ENCODE measurements at regions of chr15 and their contacts with region 1.

Region 1: DNA sequence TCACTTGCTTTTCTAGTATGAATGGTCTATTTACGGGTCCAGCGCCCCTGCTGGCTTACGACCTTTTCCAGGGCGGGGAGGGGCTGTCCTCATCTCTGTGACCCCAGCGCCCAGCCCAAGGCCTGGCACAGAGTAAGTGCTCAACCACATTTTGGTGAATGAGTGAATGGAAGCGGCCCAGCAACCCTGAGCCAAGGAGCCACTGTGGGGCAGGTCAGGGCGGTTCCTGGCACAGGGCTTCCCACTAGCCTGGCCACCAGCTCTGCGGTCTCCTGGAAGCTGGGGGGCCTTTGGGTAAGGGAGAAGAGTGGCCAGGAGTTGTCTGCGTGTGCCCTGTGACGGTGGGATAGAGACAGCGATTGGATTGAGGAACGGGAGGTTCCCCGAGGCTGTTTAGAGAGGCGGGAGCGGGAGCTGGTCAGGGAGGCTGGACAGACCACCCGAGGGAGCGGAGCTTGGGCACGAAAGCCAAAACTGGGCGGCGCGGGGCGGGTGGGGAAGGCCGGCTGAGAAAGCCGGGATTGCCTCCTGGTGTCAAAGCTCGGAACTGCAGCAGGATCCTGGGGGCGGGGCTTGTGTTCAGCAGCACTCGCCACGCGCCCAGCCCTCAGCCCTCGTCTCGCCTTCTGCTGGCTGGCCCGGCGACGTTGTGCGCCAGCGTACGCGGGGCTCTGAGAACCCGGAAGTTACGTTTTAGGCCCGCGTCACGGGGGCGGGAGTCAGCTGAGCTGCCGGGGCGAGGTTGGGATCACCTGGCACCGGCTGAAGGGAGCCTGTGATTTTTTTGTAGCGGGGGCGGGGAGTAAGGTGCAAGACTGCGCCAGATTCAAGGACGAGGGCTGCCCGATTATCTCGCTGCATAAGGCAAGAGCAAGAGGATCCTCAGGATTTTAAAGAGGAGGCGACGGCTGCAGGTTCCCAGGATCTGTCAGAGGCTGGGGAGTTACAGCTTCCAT is at the start of gene VPS18:
- DNase-seq: peak; percentile 96 to 99 (median 98)
- ATAC-seq: peak; percentile 99
- H3K4me3 ChIP-seq: peak within 1 kb of the TSS; percentile 94
- H3K4me3 Mint-ChIP-seq: peak within 1 kb of the TSS; percentile 96 to 99 (median 98)
- H3K27ac ChIP-seq: peak within 1 kb of the TSS; percentile 83
- H3K27ac Mint-ChIP-seq: peak within 1 kb of the TSS; percentile 87 to 98 (median 96)
- H3K4me1 ChIP-seq: peaks cover 17 to 18% of the 10 kb centered on the region in 2 donors
- H3K4me1 Mint-ChIP-seq: peaks cover 30 to 47% (median 37%) of the 10 kb centered on the region in 7 donors
- H3K27me3 ChIP-seq: no peaks in the 10 kb centered on the region
- H3K27me3 Mint-ChIP-seq: peaks cover 0 to 7% (median 0%) of the 10 kb centered on the region in 5 donors
- total RNA-seq, gene VPS18: 19.9 to 22.3 (median 20.5) TPM

Region 2: GRCh38 chr15:40513609-40514008 is 380.4 kb before region 1 on chr15:
- CTCF ChIA-PET with region 1: no interaction called
- POLR2A ChIA-PET with region 1: no interaction called
- intact Hi-C with region 1: loop called in 1 of 2 experiments (anchors 2 kb)
- DNase-seq: no peak
- ATAC-seq: no peak
- H3K4me3 ChIP-seq: no peak overlapping the region
- H3K4me3 Mint-ChIP-seq: no peak overlapping the region
- H3K27ac ChIP-seq: no peak overlapping the region
- H3K27ac Mint-ChIP-seq: no peak overlapping the region
- H3K4me1 ChIP-seq: peaks cover 0 to 6% of the 10 kb centered on the region in 2 donors
- H3K4me1 Mint-ChIP-seq: peaks cover 11 to 23% (median 19%) of the 10 kb centered on the region in 7 donors
- H3K27me3 ChIP-seq: peaks cover 9 to 15% of the 10 kb centered on the region in 2 donors
- H3K27me3 Mint-ChIP-seq: peaks cover 40 to 63% (median 46%) of the 10 kb centered on the region in 5 donors

Region 3: GRCh38 chr15:40593588-40594428 is 300.2 kb before region 1 on chr15 and contains the start of gene KNL1:
- CTCF ChIA-PET with region 1: no interaction called
- POLR2A ChIA-PET with region 1: interaction called, 3 read pairs
- intact Hi-C with region 1: loop called (anchors 1 to 10 kb)
- DNase-seq: peak; percentile 83 to 94 (median 91)
- ATAC-seq: peak; percentile 85
- H3K4me3 ChIP-seq: peak within 1 kb of the TSS; percentile 98
- H3K4me3 Mint-ChIP-seq: peak within 1 kb of the TSS; percentile 91 to 99 (median 96)
- H3K27ac ChIP-seq: peak within 1 kb of the TSS; percentile 83
- H3K27ac Mint-ChIP-seq: peak within 1 kb of the TSS; percentile 91 to 100 (median 98)
- H3K4me1 ChIP-seq: peaks cover 11 to 12% of the 10 kb centered on the region in 2 donors
- H3K4me1 Mint-ChIP-seq: peaks cover 13 to 41% (median 25%) of the 10 kb centered on the region in 7 donors
- H3K27me3 ChIP-seq: no peaks in the 10 kb centered on the region
- H3K27me3 Mint-ChIP-seq: peaks cover 0 to 12% (median 6%) of the 10 kb centered on the region in 5 donors
- total RNA-seq, gene KNL1: 0.16 to 41.5 (median 1.7) TPM

Region 4: DNA sequence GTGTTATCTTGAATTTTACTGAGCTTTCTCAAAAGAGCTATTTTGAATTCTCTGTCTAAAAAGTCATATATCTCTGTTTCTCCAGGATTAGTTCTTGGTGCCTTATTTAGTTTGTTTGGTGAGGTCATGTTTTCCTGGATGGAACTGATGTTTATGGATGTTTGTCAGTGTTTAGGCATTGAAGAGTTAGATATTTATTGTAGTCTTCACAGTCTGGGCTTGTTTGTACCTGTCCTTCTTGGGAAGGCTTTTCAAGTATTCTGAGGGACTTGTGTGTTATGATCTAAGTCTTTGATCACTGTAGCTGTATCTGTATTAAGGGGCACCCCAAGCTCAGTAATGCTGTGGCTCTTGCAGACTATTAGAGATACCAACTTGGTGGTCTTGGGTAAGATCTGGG is 209.6 kb before region 1 on chr15:
- CTCF ChIA-PET with region 1: interaction called, 10 read pairs
- POLR2A ChIA-PET with region 1: no interaction called
- intact Hi-C with region 1: loop called (anchors 1 to 5 kb)
- DNase-seq: no peak
- ATAC-seq: no peak
- H3K4me3 ChIP-seq: no peak overlapping the region
- H3K4me3 Mint-ChIP-seq: no peak overlapping the region
- H3K27ac ChIP-seq: no peak overlapping the region
- H3K27ac Mint-ChIP-seq: peak overlapping the region in 3 of 9 donors; percentile 41 to 57 (median 47)
- H3K4me1 ChIP-seq: no peaks in the 10 kb centered on the region
- H3K4me1 Mint-ChIP-seq: peaks cover 0 to under 1% (median 0%) of the 10 kb centered on the region in 7 donors
- H3K27me3 ChIP-seq: no peaks in the 10 kb centered on the region
- H3K27me3 Mint-ChIP-seq: peaks cover 0 to 3% (median 0%) of the 10 kb centered on the region in 5 donors

Region 5: DNA sequence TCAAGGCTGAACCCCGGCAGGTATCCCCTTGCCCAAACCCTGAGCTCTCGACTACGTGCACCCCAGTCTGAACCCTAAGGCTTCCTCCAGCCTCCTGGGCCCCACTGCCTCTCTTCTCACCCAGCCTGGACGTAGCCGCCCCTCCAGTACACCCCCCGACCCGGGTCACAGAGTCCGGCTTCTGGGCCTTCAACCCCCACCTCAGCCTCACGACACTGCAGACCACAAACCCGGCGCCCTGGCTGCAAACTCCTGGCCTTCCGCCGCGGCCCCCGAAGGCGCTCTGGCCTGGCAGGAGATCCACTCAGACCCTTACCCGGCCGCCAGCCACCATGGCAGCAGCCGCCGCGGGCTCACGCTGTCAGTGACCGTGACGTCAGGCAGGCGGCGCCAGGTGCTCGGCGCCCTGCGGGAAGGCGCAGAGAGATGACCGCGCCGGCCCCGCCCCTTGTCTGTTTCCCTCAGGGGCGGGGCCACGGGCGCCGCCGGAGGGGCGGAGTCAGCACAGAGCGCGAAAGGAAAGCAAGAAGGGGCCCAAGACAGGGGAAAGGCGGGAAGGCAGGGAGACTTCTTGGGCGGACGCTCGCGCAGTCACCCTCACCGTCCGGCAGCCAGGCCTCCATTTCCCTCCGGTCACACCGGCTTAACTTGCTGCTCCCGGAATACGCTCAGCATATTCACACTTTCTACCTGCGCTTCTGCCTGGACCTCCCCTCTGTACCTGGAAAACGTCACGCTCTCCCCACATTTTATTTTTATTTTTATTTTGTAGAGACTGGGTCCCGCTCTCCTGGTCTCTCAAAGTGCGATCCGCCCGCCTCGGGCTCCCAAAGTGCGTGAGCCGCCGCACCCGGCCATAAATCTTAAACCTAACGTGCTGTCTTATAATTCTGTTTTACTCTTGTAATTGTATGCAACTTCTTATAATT is 138.9 kb before region 1 on chr15 and contains the start of gene RMDN3:
- CTCF ChIA-PET with region 1: no interaction called
- POLR2A ChIA-PET with region 1: no interaction called
- intact Hi-C with region 1: loop called (anchors 1 kb)
- DNase-seq: peak; percentile 89 to 97 (median 92)
- ATAC-seq: peak; percentile 99
- H3K4me3 ChIP-seq: peak within 1 kb of the TSS; percentile 94
- H3K4me3 Mint-ChIP-seq: peak within 1 kb of the TSS; percentile 90 to 98 (median 94)
- H3K27ac ChIP-seq: peak within 1 kb of the TSS; percentile 95
- H3K27ac Mint-ChIP-seq: peak within 1 kb of the TSS; percentile 89 to 99 (median 95)
- H3K4me1 ChIP-seq: peaks cover 7 to 10% of the 10 kb centered on the region in 2 donors
- H3K4me1 Mint-ChIP-seq: peaks cover 16 to 37% (median 27%) of the 10 kb centered on the region in 7 donors
- H3K27me3 ChIP-seq: no peaks in the 10 kb centered on the region
- H3K27me3 Mint-ChIP-seq: no peaks in the 10 kb centered on the region
- total RNA-seq, gene RMDN3: 19.5 to 44.0 (median 31.9) TPM

Region 6: DNA sequence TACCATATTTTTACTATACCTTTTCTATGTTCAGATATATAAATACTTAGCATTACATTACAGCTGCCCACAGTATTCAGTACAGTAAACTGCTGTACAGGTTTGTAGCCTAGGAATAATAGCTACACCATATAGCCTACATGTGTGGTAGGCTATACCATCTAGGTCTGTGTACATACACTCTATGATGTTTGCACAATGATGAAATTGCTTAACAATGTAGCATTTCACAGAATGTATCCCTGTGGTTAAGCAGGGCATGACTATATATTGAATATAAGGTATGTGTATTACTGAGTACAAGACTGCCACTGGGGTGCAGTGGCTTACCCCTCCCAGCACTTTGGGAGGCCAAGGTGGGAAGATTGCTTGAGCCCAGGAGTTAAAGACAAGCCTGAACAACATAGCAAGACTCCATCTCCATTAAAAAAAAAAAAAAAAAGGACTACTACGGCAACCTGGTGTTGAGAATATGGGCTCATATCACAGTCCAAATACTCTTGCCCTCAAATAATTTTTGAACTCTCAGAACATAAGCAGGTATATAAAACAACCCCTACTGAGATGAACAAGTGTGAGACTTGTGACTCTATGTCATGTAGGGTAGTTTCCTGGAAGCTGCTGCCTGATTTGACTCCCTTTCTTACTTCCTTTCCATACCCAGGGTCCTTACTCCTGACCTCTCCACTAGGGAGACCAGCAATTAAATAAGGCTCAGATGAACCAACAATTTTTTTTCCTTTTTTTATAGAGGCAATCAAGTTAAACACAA is 70.3 kb before region 1 on chr15:
- CTCF ChIA-PET with region 1: no interaction called
- POLR2A ChIA-PET with region 1: no interaction called
- intact Hi-C with region 1: no loop called
- DNase-seq: no peak
- ATAC-seq: no peak
- H3K4me3 ChIP-seq: no peak overlapping the region
- H3K4me3 Mint-ChIP-seq: no peak overlapping the region
- H3K27ac ChIP-seq: no peak overlapping the region
- H3K27ac Mint-ChIP-seq: no peak overlapping the region
- H3K4me1 ChIP-seq: no peaks in the 10 kb centered on the region
- H3K4me1 Mint-ChIP-seq: no peaks in the 10 kb centered on the region
- H3K27me3 ChIP-seq: no peaks in the 10 kb centered on the region
- H3K27me3 Mint-ChIP-seq: peaks cover 0 to 20% (median 0%) of the 10 kb centered on the region in 5 donors

Region 7: DNA sequence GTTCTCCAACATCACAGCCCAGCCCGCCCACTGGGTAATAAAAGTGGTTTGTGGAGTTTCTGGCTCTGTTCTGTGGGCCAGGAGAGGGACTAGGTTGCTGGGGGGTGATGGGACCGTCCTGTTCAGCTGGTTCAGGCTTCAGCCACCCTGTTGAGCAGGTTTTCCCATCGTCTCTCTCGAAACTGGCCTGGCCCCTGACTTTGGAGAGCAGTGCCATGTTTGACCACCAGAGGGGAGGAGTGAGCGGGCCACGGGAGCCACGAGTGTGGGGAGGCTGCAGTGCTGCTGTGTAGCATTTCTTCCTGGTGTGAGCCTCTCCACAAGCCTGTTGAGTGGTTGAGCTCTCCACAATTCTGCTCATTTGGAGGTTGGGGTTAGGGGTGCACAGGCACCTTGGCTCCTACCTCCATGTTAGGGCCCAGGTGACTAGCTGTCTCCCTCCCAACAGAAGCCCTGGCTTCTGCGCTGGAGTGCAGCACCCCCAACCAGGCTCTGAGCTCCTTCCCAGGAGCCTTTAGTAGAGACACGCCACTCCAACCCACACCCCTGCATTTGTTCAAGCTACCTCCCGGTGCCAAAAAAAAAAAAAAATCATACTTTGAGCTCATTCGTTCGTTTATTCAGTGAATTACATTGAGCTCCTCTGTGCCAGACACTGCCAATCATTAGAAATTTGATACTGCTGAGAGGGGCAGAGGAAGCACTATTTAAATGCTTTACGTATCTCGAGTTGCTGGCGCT is 36.2 kb before region 1 on chr15:
- CTCF ChIA-PET with region 1: interaction called, 101 read pairs
- POLR2A ChIA-PET with region 1: interaction called, 29 read pairs
- intact Hi-C with region 1: loop called (anchors 1 kb)
- DNase-seq: peak; percentile 58 to 88 (median 74)
- ATAC-seq: peak; percentile 95
- H3K4me3 ChIP-seq: no peak overlapping the region
- H3K4me3 Mint-ChIP-seq: no peak overlapping the region
- H3K27ac ChIP-seq: no peak overlapping the region
- H3K27ac Mint-ChIP-seq: peak overlapping the region in 1 of 9 donors; percentile 9
- H3K4me1 ChIP-seq: no peaks in the 10 kb centered on the region
- H3K4me1 Mint-ChIP-seq: peaks cover 0 to 18% (median 13%) of the 10 kb centered on the region in 7 donors
- H3K27me3 ChIP-seq: no peaks in the 10 kb centered on the region
- H3K27me3 Mint-ChIP-seq: peaks cover 0 to 2% (median 0%) of the 10 kb centered on the region in 5 donors

Region 8: GRCh38 chr15:40873625-40874561 is 20.1 kb before region 1 on chr15 and contains the start of gene RHOV:
- CTCF ChIA-PET with region 1: interaction called, 7 read pairs
- POLR2A ChIA-PET with region 1: no interaction called
- intact Hi-C with region 1: loop called (anchors 1 kb)
- DNase-seq: peak; percentile 12 to 67 (median 36)
- ATAC-seq: peak; percentile 89
- H3K4me3 ChIP-seq: peak within 1 kb of the TSS; percentile 53
- H3K4me3 Mint-ChIP-seq: peak within 1 kb of the TSS; percentile 74 to 93 (median 84)
- H3K27ac ChIP-seq: peak within 1 kb of the TSS; percentile 56
- H3K27ac Mint-ChIP-seq: peak within 1 kb of the TSS in 1 of 9 donors; percentile 36
- H3K4me1 ChIP-seq: peaks cover 0 to 6% of the 10 kb centered on the region in 2 donors
- H3K4me1 Mint-ChIP-seq: peaks cover 4 to 23% (median 5%) of the 10 kb centered on the region in 7 donors
- H3K27me3 ChIP-seq: no peaks in the 10 kb centered on the region
- H3K27me3 Mint-ChIP-seq: peaks cover 0 to 16% (median 6%) of the 10 kb centered on the region in 5 donors
- total RNA-seq, gene RHOV: 0.39 TPM in 1 of 5 experiments, not detected in the others

Measured in naive thymus-derived CD4-positive, alpha-beta T cell (primary cell).